Mammary epithelial cell (primary cell): ENCODE measurements at regions of chr2 and their contacts with region 1.

Region 1: GRCh38 chr2:217166241-217166850 is 306.5 kb upstream of the TNP1 start:
- DNase-seq: peak; percentile 27
- H3K4me3 ChIP-seq: no peak overlapping the region
- H3K27ac ChIP-seq: no peak overlapping the region
- H3K4me1 ChIP-seq: peaks cover 8% of the 10 kb centered on the region
- H3K27me3 ChIP-seq: no peaks in the 10 kb centered on the region
- CTCF ChIP-seq: peak; percentile 57 to 69

Region 2: GRCh38 chr2:216692636-216693413 is 473.5 kb before region 1 on chr2:
- CTCF ChIA-PET with region 1: no interaction called
- dilution Hi-C with region 1: no loop called
- in situ Hi-C with region 1: loop called (anchors 5 to 10 kb)
- intact Hi-C with region 1: loop called (anchors 1 kb)
- DNase-seq: peak; percentile 50
- H3K4me3 ChIP-seq: peak overlapping the region; percentile 37 to 48 (median 40)
- H3K27ac ChIP-seq: no peak overlapping the region
- H3K4me1 ChIP-seq: peaks cover 35% of the 10 kb centered on the region
- H3K27me3 ChIP-seq: peaks cover 4% of the 10 kb centered on the region
- CTCF ChIP-seq: no peak

Region 3: GRCh38 chr2:216777650-216778273 is 388.6 kb before region 1 on chr2:
- CTCF ChIA-PET with region 1: interaction called, 4 read pairs
- dilution Hi-C with region 1: no loop called
- in situ Hi-C with region 1: no loop called
- intact Hi-C with region 1: loop called (anchors 2 kb)
- DNase-seq: peak; percentile 76
- H3K4me3 ChIP-seq: no peak overlapping the region
- H3K27ac ChIP-seq: no peak overlapping the region
- H3K4me1 ChIP-seq: peaks cover 13% of the 10 kb centered on the region
- H3K27me3 ChIP-seq: no peaks in the 10 kb centered on the region
- CTCF ChIP-seq: peak; percentile 96 to 97

Region 4: DNA sequence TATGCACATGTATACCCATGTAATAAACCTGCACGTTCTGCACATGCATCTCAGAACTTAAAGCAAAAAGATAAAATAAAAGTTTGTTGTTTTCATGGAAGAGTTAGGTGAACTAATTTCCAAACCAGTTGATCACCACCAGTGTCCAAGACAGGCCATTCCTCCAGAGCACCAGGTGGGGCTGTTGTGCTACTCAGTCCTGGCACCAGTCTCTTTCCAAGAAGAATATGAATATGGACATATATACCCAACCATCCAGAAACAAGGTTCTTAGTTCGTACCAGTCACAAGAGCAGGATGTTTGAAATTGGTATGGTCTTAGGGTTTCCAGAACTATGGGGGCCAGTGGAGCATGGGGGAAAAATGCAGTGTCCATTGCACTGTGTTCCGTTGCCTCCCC is 289.3 kb before region 1 on chr2:
- CTCF ChIA-PET with region 1: no interaction called
- dilution Hi-C with region 1: no loop called
- in situ Hi-C with region 1: no loop called
- intact Hi-C with region 1: loop called (anchors 1 kb)
- DNase-seq: no peak
- H3K4me3 ChIP-seq: no peak overlapping the region
- H3K27ac ChIP-seq: no peak overlapping the region
- H3K4me1 ChIP-seq: no peaks in the 10 kb centered on the region
- H3K27me3 ChIP-seq: no peaks in the 10 kb centered on the region
- CTCF ChIP-seq: peak; percentile 37 to 55

Region 5: DNA sequence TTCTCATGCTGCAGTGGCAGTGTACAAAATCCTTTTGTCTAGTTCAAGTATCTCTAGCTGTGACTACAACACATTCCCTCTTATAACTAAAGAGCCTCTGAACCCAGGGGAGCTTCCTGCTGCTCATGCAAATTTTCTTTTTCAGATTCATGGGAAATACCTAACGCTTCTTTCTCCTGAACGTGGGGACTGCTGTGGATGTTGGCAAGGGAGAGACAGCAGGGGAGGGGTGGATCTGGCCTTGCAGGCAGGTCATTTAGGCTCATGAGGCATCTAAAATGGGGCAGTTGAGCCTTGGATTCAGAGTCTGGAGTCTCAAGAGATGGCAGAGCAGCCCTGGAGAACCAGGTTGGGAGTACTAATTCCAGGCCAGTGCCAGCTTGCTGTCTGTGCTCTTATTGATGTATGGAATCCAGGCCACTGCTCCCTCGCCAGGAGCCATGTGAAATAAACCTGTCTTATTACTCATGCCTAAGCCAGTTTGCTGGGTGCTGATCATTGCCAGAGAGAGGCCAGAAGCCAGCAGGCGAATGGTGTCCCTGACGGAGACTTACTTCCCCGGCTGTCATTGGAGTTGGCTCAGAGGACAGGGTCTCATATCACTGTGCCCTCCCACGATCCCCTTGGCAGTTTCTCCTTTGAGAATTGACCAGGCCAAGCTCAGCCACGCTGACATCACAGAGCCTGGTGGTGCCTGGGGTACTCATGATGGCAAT is 277.3 kb before region 1 on chr2:
- CTCF ChIA-PET with region 1: interaction called, 13 read pairs
- dilution Hi-C with region 1: no loop called
- in situ Hi-C with region 1: no loop called
- intact Hi-C with region 1: no loop called
- DNase-seq: peak; percentile 10
- H3K4me3 ChIP-seq: no peak overlapping the region
- H3K27ac ChIP-seq: no peak overlapping the region
- H3K4me1 ChIP-seq: no peaks in the 10 kb centered on the region
- H3K27me3 ChIP-seq: peaks cover 2% of the 10 kb centered on the region
- CTCF ChIP-seq: no peak

Region 6: DNA sequence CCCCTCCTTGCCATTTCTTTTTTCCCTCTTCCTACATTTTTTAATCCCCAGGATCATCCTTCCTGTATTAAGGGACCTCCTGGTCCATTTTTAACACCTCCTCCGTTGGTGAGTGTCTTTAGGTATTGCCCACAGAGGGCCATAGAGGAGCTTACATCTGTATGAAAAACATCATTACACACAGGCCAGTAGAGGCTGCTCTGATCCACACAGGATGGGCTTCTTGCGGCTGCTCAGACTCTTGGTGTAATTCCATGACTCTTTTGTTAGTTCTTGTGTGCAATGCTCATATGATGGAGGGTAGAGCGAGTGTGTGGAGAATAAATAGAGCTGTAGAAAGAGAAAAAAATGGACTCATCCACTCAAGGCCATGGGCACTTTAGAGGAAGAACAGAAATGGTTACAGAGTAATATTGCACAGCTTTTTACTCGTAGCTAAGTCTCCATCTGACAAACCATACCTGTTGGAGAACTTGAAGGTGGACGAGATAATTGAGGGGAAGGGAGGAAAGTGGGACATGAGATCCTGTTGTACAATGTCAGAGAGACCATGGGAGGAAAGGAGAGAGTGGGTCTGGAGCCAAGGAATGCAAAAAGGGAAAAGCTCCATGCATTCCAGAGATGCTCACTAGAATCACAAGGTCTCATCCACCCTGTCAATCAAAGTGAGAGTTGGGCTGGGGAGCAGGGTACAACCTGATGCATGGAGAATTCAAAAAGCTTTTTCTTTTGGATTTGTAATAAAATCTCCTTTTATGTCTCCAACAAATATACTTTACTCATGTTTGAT is 176.8 kb before region 1 on chr2:
- CTCF ChIA-PET with region 1: no interaction called
- dilution Hi-C with region 1: no loop called
- in situ Hi-C with region 1: no loop called
- intact Hi-C with region 1: no loop called
- DNase-seq: peak; percentile 0
- H3K4me3 ChIP-seq: no peak overlapping the region
- H3K27ac ChIP-seq: no peak overlapping the region
- H3K4me1 ChIP-seq: no peaks in the 10 kb centered on the region
- H3K27me3 ChIP-seq: no peaks in the 10 kb centered on the region
- CTCF ChIP-seq: peak in 1 of 2 donors; percentile 24

Region 7: DNA sequence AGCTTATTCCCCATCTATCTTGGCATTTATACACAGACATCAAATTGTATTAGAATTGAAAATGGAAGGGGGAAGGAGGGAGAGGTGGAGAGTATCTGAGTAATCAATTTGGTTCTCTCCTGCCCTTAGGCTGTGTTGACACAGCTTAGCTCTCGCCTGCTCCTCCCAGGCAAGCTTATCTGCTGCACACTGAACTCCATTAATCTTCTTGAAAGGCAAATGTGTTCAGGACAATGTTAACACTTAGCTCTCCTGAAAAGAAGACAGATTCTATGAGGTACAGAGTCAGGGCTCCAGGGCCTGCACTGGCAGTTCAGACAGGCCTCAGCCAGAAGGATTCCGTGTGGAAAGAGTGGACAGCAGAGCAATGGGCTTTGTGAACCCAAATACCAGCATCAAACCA is 123.5 kb after region 1 on chr2:
- CTCF ChIA-PET with region 1: no interaction called
- dilution Hi-C with region 1: no loop called
- in situ Hi-C with region 1: no loop called
- intact Hi-C with region 1: loop called (anchors 10 kb)
- DNase-seq: peak; percentile 70
- H3K4me3 ChIP-seq: no peak overlapping the region
- H3K27ac ChIP-seq: no peak overlapping the region
- H3K4me1 ChIP-seq: peaks cover 11% of the 10 kb centered on the region
- H3K27me3 ChIP-seq: no peaks in the 10 kb centered on the region
- CTCF ChIP-seq: no peak

Region 8: DNA sequence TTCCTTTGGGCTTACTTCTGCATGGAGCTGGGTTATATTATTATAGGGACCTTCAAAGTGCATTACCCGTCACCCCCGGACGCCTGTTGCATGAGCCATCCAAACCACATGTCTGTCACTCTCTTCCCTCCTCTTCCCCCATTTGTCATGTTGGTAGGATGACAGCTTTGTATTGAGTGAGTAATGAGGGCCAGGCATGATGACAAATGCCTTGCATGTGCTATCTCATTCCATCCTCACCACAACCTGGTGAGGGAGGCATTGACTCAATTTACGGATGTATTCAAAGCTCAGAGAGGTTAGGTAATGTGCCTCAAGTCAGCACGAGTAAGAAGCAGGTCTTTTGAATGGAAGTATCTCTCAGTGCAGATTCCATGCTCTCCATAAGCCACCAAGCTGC is 204.0 kb after region 1 on chr2:
- CTCF ChIA-PET with region 1: interaction called, 4 read pairs
- dilution Hi-C with region 1: no loop called
- in situ Hi-C with region 1: no loop called
- intact Hi-C with region 1: loop called (anchors 1 kb)
- DNase-seq: peak; percentile 96
- H3K4me3 ChIP-seq: no peak overlapping the region
- H3K27ac ChIP-seq: no peak overlapping the region
- H3K4me1 ChIP-seq: peaks cover 37% of the 10 kb centered on the region
- H3K27me3 ChIP-seq: no peaks in the 10 kb centered on the region
- CTCF ChIP-seq: peak; percentile 16 to 51

Region 9: DNA sequence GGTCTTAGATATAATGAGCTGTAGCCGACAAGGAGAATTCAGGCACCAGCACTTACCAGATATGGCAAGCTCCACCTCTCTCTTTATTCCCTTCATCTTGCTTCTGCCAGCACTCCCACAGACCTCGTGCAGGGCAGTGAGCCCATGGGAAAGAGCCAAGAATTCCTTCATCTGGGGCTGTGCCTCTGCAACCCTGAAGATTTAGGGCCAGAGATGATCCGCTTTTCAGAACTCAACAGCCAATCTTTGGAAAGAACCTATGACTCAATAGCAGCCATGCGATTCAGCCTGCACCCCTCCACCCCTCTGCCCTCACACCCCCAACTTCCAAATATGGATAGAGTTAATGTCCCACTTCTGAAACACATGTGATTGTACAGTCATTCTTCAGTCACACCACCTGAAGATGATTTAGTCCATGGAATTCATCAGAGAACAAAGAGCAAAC is 227.3 kb after region 1 on chr2:
- CTCF ChIA-PET with region 1: no interaction called
- dilution Hi-C with region 1: no loop called
- in situ Hi-C with region 1: no loop called
- intact Hi-C with region 1: no loop called
- DNase-seq: peak; percentile 91
- H3K4me3 ChIP-seq: peak overlapping the region; percentile 27 to 42 (median 36)
- H3K27ac ChIP-seq: peak overlapping the region; percentile 73
- H3K4me1 ChIP-seq: peaks cover 21% of the 10 kb centered on the region
- H3K27me3 ChIP-seq: no peaks in the 10 kb centered on the region
- CTCF ChIP-seq: no peak